ENCODE measurements at regions of chr20 and their contacts with region 1.

Region 1: GRCh38 chr20:5205348-5206210 is 78.8 kb downstream of the CDS2 start:
- DNase-seq: peak; percentile 46 to 68
- H3K4me3 ChIP-seq: no peak overlapping the region
- H3K27ac ChIP-seq: no peak overlapping the region
- H3K4me1 ChIP-seq: no peaks in the 10 kb centered on the region
- H3K27me3 ChIP-seq: no peaks in the 10 kb centered on the region
- CTCF ChIP-seq: peak; percentile 89

Region 2: DNA sequence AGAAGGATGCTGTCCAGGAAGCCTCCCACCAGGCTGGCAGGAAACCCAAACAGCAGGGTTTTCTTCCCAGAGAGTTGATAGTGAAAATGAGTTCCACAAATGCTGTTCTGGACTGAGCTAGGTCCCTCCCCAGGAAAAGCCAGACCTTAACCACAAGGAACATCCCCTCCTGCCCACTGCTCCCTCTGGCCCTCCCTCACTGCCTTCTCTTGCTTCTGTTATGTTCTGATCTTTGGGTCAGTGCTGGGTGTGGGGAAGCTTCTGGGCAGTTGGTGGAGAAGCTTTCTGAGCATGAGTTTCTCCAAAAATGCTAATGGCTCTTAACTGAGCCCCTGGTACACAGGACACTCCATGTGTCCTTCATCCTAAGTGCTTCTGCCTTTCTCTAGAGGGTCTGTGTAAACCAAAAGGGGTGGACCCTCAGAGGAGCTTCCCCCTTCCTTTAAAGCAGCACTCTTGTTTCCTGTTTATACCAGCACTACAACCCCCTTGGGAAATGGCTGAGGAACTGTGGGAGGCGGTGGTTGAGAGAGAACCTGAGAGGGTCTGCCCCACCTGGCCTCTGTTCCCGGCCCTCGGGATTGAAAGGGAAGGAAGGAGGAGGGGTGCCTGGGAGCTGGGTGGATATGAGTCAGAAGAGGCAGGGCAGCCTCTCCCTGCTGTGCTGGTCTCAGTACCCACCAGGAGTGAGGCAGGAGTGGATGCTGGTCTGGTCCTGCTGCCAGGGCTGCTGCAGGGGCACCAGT is 36.8 kb before region 1 on chr20:
- CTCF ChIA-PET with region 1: no interaction called
- POLR2A ChIA-PET with region 1: no interaction called
- intact Hi-C with region 1: no loop called
- DNase-seq: peak; percentile 48 to 49
- H3K4me3 ChIP-seq: no peak overlapping the region
- H3K27ac ChIP-seq: peak overlapping the region; percentile 64
- H3K4me1 ChIP-seq: peaks cover 18% of the 10 kb centered on the region
- H3K27me3 ChIP-seq: no peaks in the 10 kb centered on the region
- CTCF ChIP-seq: no peak

Region 3: GRCh38 chr20:5234158-5234557 is 28.6 kb after region 1 on chr20:
- CTCF ChIA-PET with region 1: no interaction called
- POLR2A ChIA-PET with region 1: no interaction called
- intact Hi-C with region 1: no loop called
- DNase-seq: no peak
- H3K4me3 ChIP-seq: no peak overlapping the region
- H3K27ac ChIP-seq: no peak overlapping the region
- H3K4me1 ChIP-seq: no peaks in the 10 kb centered on the region
- H3K27me3 ChIP-seq: peaks cover 65% of the 10 kb centered on the region
- CTCF ChIP-seq: no peak

Region 4: DNA sequence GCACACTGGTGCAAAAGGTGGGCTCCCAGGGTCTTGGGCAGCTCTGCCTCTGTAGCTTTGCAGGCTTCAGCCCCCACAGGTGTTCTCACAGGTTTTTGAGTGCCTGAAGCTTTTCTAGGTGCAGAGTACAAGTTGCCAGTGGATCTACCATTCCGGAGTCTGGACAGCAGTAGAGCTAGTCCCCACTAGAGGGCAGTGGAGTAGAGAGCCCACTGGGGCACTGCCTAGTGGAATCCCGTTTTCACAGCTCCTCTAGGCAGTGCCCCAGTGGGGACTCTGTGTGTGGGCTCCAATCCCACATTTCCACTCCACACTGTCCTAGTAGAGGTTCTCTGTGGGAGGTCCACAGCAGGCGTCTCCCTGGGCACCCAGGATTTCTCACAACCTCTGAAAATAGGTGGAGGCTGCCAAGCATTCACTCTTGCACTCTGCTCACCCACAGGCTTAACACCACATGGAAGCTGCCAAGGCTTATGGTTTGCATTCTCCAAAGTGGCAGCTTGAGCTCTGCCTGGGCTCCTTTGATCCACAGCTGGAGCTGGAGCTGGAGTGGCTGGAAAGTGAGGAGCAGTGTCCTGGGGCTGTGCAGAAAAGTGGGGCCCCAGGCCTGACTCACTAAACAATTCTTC is 197.4 kb after region 1 on chr20:
- CTCF ChIA-PET with region 1: no interaction called
- POLR2A ChIA-PET with region 1: no interaction called
- intact Hi-C with region 1: no loop called
- DNase-seq: peak in 1 of 2 experiments; percentile 17
- H3K4me3 ChIP-seq: no peak overlapping the region
- H3K27ac ChIP-seq: no peak overlapping the region
- H3K4me1 ChIP-seq: no peaks in the 10 kb centered on the region
- H3K27me3 ChIP-seq: peaks cover 6% of the 10 kb centered on the region
- CTCF ChIP-seq: peak; percentile 70

Region 5: DNA sequence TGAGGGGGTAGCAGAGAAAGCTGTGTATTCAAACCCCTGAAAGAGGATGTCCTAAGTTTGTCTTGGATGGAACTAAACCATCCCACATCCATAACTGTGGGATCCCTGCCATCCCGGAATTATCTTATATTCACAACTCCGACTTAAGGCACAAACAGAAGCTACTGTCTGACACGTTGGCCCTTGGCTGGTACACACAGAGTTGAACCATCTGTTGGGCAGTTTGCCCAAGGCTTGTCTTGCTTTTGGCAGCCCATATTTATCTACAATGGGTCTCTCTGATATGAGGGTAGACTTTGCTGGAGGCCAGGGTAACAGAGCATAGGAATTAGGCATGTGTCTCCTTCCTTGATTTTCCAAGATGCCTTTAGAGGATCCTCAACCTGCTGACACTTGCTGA is 227.8 kb after region 1 on chr20:
- CTCF ChIA-PET with region 1: interaction called, 15 read pairs
- POLR2A ChIA-PET with region 1: no interaction called
- intact Hi-C with region 1: no loop called
- DNase-seq: no peak
- H3K4me3 ChIP-seq: no peak overlapping the region
- H3K27ac ChIP-seq: no peak overlapping the region
- H3K4me1 ChIP-seq: no peaks in the 10 kb centered on the region
- H3K27me3 ChIP-seq: peaks cover 77% of the 10 kb centered on the region
- CTCF ChIP-seq: no peak

Region 6: DNA sequence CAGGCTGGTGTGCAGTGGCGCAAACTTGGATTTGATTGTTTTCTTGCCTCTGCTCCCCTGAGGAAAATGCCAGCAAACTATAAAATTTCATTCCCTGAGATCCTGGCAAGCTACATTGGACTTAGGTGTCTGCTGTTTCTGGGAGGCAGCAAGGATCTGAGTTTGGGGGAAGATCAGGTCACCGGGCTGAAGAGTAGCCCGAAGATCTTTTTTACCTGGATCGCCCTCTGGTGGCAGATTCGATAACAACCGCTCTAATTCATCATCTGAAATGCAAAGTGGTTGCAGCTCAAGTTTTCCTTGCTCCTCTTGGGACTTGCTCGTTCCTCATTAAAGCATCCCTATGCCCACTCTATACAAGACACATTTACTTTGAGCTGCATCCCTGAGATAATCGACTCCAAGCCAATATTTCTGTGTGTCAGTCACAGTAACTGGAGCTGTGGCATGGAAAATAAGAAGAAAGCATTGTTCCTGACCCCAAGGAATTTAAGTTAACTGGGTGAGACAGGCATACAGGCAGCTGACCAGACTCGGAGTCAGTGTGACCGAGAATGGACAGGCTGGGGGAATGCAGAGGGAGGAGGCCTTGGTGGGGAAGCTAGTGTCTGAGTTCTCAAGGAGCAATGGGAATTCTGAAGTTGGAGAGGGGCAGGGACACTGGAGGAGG is 243.0 kb after region 1 on chr20:
- CTCF ChIA-PET with region 1: interaction called, 10 read pairs
- POLR2A ChIA-PET with region 1: no interaction called
- intact Hi-C with region 1: loop called (anchors 1 kb)
- DNase-seq: peak; percentile 33 to 50
- H3K4me3 ChIP-seq: no peak overlapping the region
- H3K27ac ChIP-seq: no peak overlapping the region
- H3K4me1 ChIP-seq: no peaks in the 10 kb centered on the region
- H3K27me3 ChIP-seq: peaks cover 20% of the 10 kb centered on the region
- CTCF ChIP-seq: peak; percentile 82

Measured in PC-9 (cell line).